ENCODE measurements at regions of chr4 and their contacts with region 1.

Region 1: DNA sequence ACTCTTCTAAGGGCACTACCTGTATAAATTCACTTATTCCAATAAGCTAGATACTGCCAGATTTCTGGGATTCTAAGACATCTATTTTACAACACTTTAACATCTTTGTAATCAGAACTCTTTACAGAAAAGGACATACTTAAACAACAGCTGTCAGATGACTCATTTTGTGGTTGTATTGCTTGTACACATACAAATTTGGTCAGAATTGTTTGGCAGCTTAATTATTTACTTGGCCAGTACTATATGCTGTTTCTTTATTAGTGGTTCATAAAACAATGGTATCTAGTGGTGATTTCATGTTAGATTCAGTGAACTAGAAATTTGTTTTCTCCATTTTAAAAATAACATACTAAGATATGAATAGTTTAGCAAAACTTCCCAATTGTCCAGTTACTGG is 27.2 kb downstream of the PALLD start:
- DNase-seq: no peak
- ATAC-seq: no peak
- H3K4me3 ChIP-seq: no peak overlapping the region
- H3K27ac ChIP-seq: peak overlapping the region in 8 of 12 donors; percentile 1 to 78 (median 62)
- H3K4me1 ChIP-seq: peaks cover 0 to 63% (median 17%) of the 10 kb centered on the region in 12 donors
- H3K27me3 ChIP-seq: no peaks in the 10 kb centered on the region
- CTCF ChIP-seq: no peak
- POLR2A ChIP-seq: no peak

Region 2: GRCh38 chr4:168558599-168558998 is 34.6 kb after region 1 on chr4:
- intact Hi-C with region 1: loop called in 2 of 10 experiments (anchors 5 kb)
- DNase-seq: no peak
- ATAC-seq: no peak
- H3K4me3 ChIP-seq: no peak overlapping the region
- H3K27ac ChIP-seq: no peak overlapping the region
- H3K4me1 ChIP-seq: peaks cover 0 to 59% (median 23%) of the 10 kb centered on the region in 12 donors
- H3K27me3 ChIP-seq: no peaks in the 10 kb centered on the region
- CTCF ChIP-seq: no peak
- POLR2A ChIP-seq: no peak